Spleen (tissue), 13 donors: ENCODE measurements at regions of chr14 and their contacts with region 1.

Region 1: GRCh38 chr14:92106143-92106926 is at the start of gene ATXN3:
- DNase-seq: peak; percentile 99
- H3K4me3 ChIP-seq: peak within 1 kb of the TSS; percentile 81 to 98 (median 95)
- H3K27ac ChIP-seq: peak within 1 kb of the TSS; percentile 73 to 99 (median 96)
- H3K4me1 ChIP-seq: peaks cover 26 to 74% (median 57%) of the 10 kb centered on the region in 6 donors
- H3K27me3 ChIP-seq: no peaks in the 10 kb centered on the region
- CTCF ChIP-seq: peak; percentile 50 to 85 (median 77)
- POLR2A ChIP-seq: no peak
- total RNA-seq, gene ATXN3: 27.1 to 76.0 (median 43.8) TPM

Region 2: GRCh38 chr14:92039719-92040430 is 66.5 kb before region 1 on chr14 and contains the start of gene TRIP11:
- intact Hi-C with region 1: loop called (anchors 5 kb)
- DNase-seq: peak; percentile 99
- H3K4me3 ChIP-seq: peak within 1 kb of the TSS; percentile 62 to 95 (median 80)
- H3K27ac ChIP-seq: peak within 1 kb of the TSS; percentile 80 to 98 (median 96)
- H3K4me1 ChIP-seq: peaks cover 26 to 60% (median 45%) of the 10 kb centered on the region in 6 donors
- H3K27me3 ChIP-seq: no peaks in the 10 kb centered on the region
- CTCF ChIP-seq: peak in 3 of 11 experiments; percentile 18 to 36 (median 22)
- POLR2A ChIP-seq: peak; percentile 18 to 61 (median 41)
- total RNA-seq, gene TRIP11: 32.9 to 75.7 (median 54.5) TPM